ENCODE measurements at regions of chr3 and their contacts with region 1.

Region 1: DNA sequence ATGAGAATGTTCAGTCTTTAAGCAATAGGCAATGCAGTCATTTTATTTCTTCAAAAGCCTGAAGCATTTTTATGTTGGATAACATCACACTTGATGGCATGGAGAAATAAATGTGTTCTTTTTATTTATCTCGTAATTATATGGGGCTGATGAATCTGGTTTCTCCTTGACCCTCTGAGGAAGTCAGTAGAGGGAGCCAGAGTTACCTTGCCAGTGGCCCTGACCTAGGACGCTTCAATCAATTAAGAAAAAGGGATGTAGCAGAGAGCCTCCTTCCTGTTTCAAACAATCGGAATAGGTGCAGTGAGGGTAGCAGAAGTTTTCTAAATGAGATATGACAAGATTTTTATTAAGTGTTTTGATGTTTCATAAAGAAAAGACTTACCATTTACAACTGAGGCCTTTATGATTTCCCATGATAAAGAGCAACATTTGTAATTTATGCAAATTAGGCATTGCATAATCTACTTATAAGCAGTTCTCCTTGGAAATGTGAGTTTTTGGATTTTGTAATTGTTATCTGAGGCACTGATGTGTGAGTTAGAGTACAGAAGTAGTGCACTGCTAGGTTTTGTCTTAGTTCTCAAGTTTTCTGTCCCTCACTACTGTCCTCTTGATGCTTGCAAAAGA is 129.1 kb downstream of the RAP2B start:
- DNase-seq: no peak
- ATAC-seq: peak in 1 of 4 donors; percentile 57
- H3K4me3 ChIP-seq: no peak overlapping the region
- H3K27ac ChIP-seq: peak overlapping the region in 1 of 12 donors; percentile 42
- H3K4me1 ChIP-seq: peaks cover 0 to 52% (median 0%) of the 10 kb centered on the region in 12 donors
- H3K27me3 ChIP-seq: no peaks in the 10 kb centered on the region
- CTCF ChIP-seq: peak in 11 of 12 donors; percentile 9 to 60 (median 40)
- POLR2A ChIP-seq: no peak

Region 2: GRCh38 chr3:153038779-153039178 is 252.4 kb before region 1 on chr3:
- intact Hi-C with region 1: loop called in 6 of 10 experiments (anchors 2 to 10 kb)
- DNase-seq: peak in 3 of 5 donors; percentile 16 to 41 (median 37)
- ATAC-seq: peak in 1 of 4 donors; percentile 68
- H3K4me3 ChIP-seq: no peak overlapping the region
- H3K27ac ChIP-seq: peak overlapping the region in 1 of 12 donors; percentile 14
- H3K4me1 ChIP-seq: peaks cover 0 to 8% (median 0%) of the 10 kb centered on the region in 12 donors
- H3K27me3 ChIP-seq: no peaks in the 10 kb centered on the region
- CTCF ChIP-seq: no peak
- POLR2A ChIP-seq: no peak

Region 3: GRCh38 chr3:153595186-153595815 is 304.1 kb after region 1 on chr3:
- intact Hi-C with region 1: loop called in 1 of 10 experiments (anchors 10 kb)
- DNase-seq: no peak
- ATAC-seq: peak in 3 of 4 donors; percentile 53 to 77 (median 65)
- H3K4me3 ChIP-seq: no peak overlapping the region
- H3K27ac ChIP-seq: no peak overlapping the region
- H3K4me1 ChIP-seq: peaks cover 0 to 11% (median 0%) of the 10 kb centered on the region in 12 donors
- H3K27me3 ChIP-seq: no peaks in the 10 kb centered on the region
- CTCF ChIP-seq: peak; percentile 34 to 67 (median 56)
- POLR2A ChIP-seq: no peak

Region 4: GRCh38 chr3:153768561-153769469 is 477.6 kb after region 1 on chr3:
- intact Hi-C with region 1: loop called in 1 of 10 experiments (anchors 10 kb)
- DNase-seq: peak in 1 of 5 donors; percentile 17
- ATAC-seq: peak; percentile 69 to 85 (median 84)
- H3K4me3 ChIP-seq: no peak overlapping the region
- H3K27ac ChIP-seq: no peak overlapping the region
- H3K4me1 ChIP-seq: no peaks in the 10 kb centered on the region
- H3K27me3 ChIP-seq: no peaks in the 10 kb centered on the region
- CTCF ChIP-seq: peak; percentile 71 to 84 (median 78)
- POLR2A ChIP-seq: no peak